ENCODE measurements at regions of chr17 and their contacts with region 1.

Region 1: DNA sequence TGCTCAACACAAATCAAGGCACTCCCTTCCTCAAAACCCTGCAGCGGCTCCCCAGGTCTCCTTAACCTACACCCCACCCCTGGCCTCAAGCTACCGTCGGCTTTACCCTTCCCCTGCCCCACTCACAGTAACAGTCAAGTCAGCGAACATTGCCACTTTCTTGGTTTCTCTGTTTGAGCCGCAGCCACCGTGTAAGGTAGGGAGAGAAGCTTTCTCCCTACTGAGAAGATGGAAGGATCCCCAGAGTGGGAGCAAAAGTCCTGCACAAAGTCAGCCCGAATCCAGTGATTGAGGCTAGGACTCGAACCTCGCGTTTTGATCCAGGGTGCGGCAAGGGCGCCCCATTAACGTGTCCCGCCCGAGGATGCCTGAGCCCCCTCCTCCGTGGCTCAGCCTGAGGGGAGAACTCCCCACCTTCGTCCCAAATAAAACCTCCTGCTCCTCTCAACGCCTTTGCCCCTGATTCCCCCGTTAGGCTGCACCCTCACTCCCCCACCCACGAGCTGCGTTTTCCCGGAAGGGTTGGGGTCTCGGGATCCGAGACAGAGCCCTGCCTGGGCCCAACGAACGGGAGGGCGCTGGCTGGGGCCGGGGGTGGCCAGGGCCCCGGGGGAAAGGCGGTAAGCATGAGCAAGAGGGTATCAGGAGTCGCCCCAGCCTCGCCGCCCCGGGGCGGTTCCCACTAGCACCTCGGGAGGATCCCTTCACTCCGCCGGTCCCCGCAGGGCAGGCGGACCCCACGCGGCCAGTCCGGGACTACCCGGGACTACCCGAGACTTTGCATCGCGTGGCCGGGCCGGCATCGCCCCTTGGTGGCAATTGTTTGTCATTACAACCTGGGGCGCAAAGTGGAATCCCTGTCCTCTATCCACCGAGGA is 9.9 kb upstream of the NAGS start:
- DNase-seq: peak; percentile 64 to 97 (median 79)

Region 2: DNA sequence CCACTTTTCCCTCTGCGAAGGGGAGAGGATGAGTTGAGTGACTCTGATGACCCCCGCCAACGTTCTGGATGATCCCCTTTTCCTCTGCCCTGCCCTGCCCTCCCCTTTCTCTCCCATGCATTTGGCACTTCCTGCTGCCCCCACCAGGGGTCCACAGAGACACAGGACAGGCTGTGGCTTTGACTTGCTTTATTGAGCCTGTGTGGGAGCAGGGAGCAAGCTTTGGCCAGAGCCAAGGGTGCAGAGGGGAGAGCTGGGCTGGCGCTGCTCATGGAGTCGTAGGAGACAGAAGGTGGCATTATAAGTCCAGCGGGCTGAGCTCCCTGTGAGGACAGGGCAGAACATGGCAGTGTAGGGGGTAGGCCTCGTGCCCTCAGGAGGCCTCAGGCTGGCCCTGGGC is 53.9 kb before region 1 on chr17:
- intact Hi-C with region 1: loop called (anchors 1 kb)
- DNase-seq: peak in 2 of 10 donors; percentile 54 to 55

Region 3: GRCh38 chr17:44210342-44211192 is 216.1 kb after region 1 on chr17:
- intact Hi-C with region 1: no loop called
- DNase-seq: peak; percentile 80 to 99 (median 88)